Body of pancreas (tissue), 4 donors: ENCODE measurements at regions of chr12 and their contacts with region 1.

Region 1: GRCh38 chr12:48857278-48857994 is 5.5 kb upstream of the DDX23 start:
- DNase-seq: no peak
- ATAC-seq: no peak
- H3K4me3 ChIP-seq: no peak overlapping the region
- H3K27ac ChIP-seq: no peak overlapping the region
- H3K4me1 ChIP-seq: peaks cover 6% of the 10 kb centered on the region
- H3K27me3 ChIP-seq: no peaks in the 10 kb centered on the region
- CTCF ChIP-seq: no peak
- POLR2A ChIP-seq: no peak

Region 2: GRCh38 chr12:48890657-48891418 is 33.4 kb after region 1 on chr12:
- intact Hi-C with region 1: loop called (anchors 5 kb)
- DNase-seq: peak; percentile 78 to 86 (median 82)
- ATAC-seq: peak; percentile 97
- H3K4me3 ChIP-seq: no peak overlapping the region
- H3K27ac ChIP-seq: no peak overlapping the region
- H3K4me1 ChIP-seq: peaks cover 8% of the 10 kb centered on the region
- H3K27me3 ChIP-seq: no peaks in the 10 kb centered on the region
- CTCF ChIP-seq: peak; percentile 86 to 95 (median 91)
- POLR2A ChIP-seq: no peak